PC-9 (cell line): ENCODE measurements at regions of chr15 and their contacts with region 1.

Region 1: GRCh38 chr15:39429898-39430357 is 151.0 kb upstream of the THBS1 start:
- DNase-seq: peak; percentile 33 to 65
- H3K4me3 ChIP-seq: no peak overlapping the region
- H3K27ac ChIP-seq: no peak overlapping the region
- H3K4me1 ChIP-seq: peaks cover 7% of the 10 kb centered on the region
- H3K27me3 ChIP-seq: no peaks in the 10 kb centered on the region
- CTCF ChIP-seq: no peak

Region 2: GRCh38 chr15:39365873-39366272 is 64.1 kb before region 1 on chr15:
- CTCF ChIA-PET with region 1: no interaction called
- POLR2A ChIA-PET with region 1: no interaction called
- intact Hi-C with region 1: no loop called
- DNase-seq: no peak
- H3K4me3 ChIP-seq: no peak overlapping the region
- H3K27ac ChIP-seq: no peak overlapping the region
- H3K4me1 ChIP-seq: peaks cover 14% of the 10 kb centered on the region
- H3K27me3 ChIP-seq: no peaks in the 10 kb centered on the region
- CTCF ChIP-seq: no peak

Region 3: GRCh38 chr15:39852250-39852649 is 422.3 kb after region 1 on chr15:
- CTCF ChIA-PET with region 1: no interaction called
- POLR2A ChIA-PET with region 1: interaction called, 13 read pairs
- intact Hi-C with region 1: no loop called
- DNase-seq: no peak
- H3K4me3 ChIP-seq: no peak overlapping the region
- H3K27ac ChIP-seq: no peak overlapping the region
- H3K4me1 ChIP-seq: no peaks in the 10 kb centered on the region; the same call in 1 of the 2 replicates
- H3K27me3 ChIP-seq: no peaks in the 10 kb centered on the region
- CTCF ChIP-seq: no peak